Dorsolateral prefrontal cortex (tissue), 120 donors: ENCODE measurements at regions of chr6 and their contacts with region 1.

Region 1: GRCh38 chr6:118893807-118894424 is at the start of gene ASF1A:
- DNase-seq: peak; percentile 85 to 97 (median 97)
- H3K4me3 ChIP-seq: peak within 1 kb of the TSS; percentile 59 to 96 (median 86)
- H3K27ac ChIP-seq: peak within 1 kb of the TSS; percentile 75 to 99 (median 95)
- H3K27me3 ChIP-seq: no peaks in the 10 kb centered on the region
- CTCF ChIP-seq: peak; percentile 37 to 88 (median 62)
- total RNA-seq, gene ASF1A: 14.8 to 32.4 (median 23.9) TPM

Region 2: GRCh38 chr6:118934461-118935330 is 40.8 kb after region 1 on chr6 and contains the start of gene MCM9:
- intact Hi-C with region 1: loop called (anchors 1 kb)
- DNase-seq: peak; percentile 59 to 91 (median 71)
- H3K4me3 ChIP-seq: peak within 1 kb of the TSS; percentile 51 to 93 (median 82)
- H3K27ac ChIP-seq: peak within 1 kb of the TSS; percentile 69 to 96 (median 90)
- H3K27me3 ChIP-seq: no peaks in the 10 kb centered on the region
- CTCF ChIP-seq: peak in 15 of 56 donors; percentile 4 to 39 (median 20)
- total RNA-seq, gene MCM9: 6.7 to 22.3 (median 13.8) TPM

Region 3: GRCh38 chr6:119078376-119079282 is 184.7 kb after region 1 on chr6 and contains the start of gene FAM184A:
- intact Hi-C with region 1: loop called in 1 of 2 experiments (anchors 5 kb)
- DNase-seq: peak; percentile 39 to 88 (median 72)
- H3K4me3 ChIP-seq: peak within 1 kb of the TSS; percentile 58 to 90 (median 80)
- H3K27ac ChIP-seq: peak within 1 kb of the TSS in 56 of 59 donors; percentile 8 to 91 (median 71)
- H3K27me3 ChIP-seq: no peaks in the 10 kb centered on the region
- CTCF ChIP-seq: peak in 39 of 56 donors; percentile 11 to 63 (median 36)
- total RNA-seq, gene FAM184A: 13.9 to 52.2 (median 26.9) TPM

Region 4: GRCh38 chr6:119105282-119105681 is 211.4 kb after region 1 on chr6:
- intact Hi-C with region 1: loop called in 1 of 2 experiments (anchors 10 kb)
- DNase-seq: no peak
- H3K4me3 ChIP-seq: no peak overlapping the region
- H3K27ac ChIP-seq: no peak overlapping the region
- H3K27me3 ChIP-seq: no peaks in the 10 kb centered on the region
- CTCF ChIP-seq: no peak

Region 5: GRCh38 chr6:119501798-119502483 is 608.0 kb after region 1 on chr6:
- intact Hi-C with region 1: no loop called
- DNase-seq: no peak
- H3K4me3 ChIP-seq: no peak overlapping the region
- H3K27ac ChIP-seq: no peak overlapping the region
- H3K27me3 ChIP-seq: no peaks in the 10 kb centered on the region
- CTCF ChIP-seq: no peak